GM12878 (cell line): ENCODE measurements at regions of chr20 and their contacts with region 1.

Region 1: GRCh38 chr20:45373353-45374100 is 4.6 kb downstream of the TP53TG5 start:
- DNase-seq: no peak
- ATAC-seq: peak; percentile 98
- H3K4me3 ChIP-seq: peak overlapping the region; percentile 59; the same call in 1 of the 2 replicates
- H3K27ac ChIP-seq: no peak overlapping the region
- H3K4me1 ChIP-seq: peaks cover 15% of the 10 kb centered on the region
- H3K27me3 ChIP-seq: no peaks in the 10 kb centered on the region
- CTCF ChIP-seq: peak; percentile 82 to 90 (median 89)
- EP300 ChIP-seq: no peak
- POLR2A ChIP-seq: no peak
- RAD21 ChIP-seq: peak; percentile 88

Region 2: GRCh38 chr20:45387274-45387673 is 13.7 kb after region 1 on chr20:
- CTCF ChIA-PET with region 1: interaction called, 24 read pairs
- POLR2A ChIA-PET with region 1: interaction called, 3 read pairs
- RAD21 ChIA-PET with region 1: interaction called, 3 read pairs
- SMC1A ChIA-PET with region 1: interaction called, 4 read pairs
- in situ Hi-C with region 1: no loop called
- intact Hi-C with region 1: no loop called
- DNase-seq: no peak
- ATAC-seq: no peak
- H3K4me3 ChIP-seq: no peak overlapping the region
- H3K27ac ChIP-seq: no peak overlapping the region
- H3K4me1 ChIP-seq: no peaks in the 10 kb centered on the region
- H3K27me3 ChIP-seq: no peaks in the 10 kb centered on the region
- CTCF ChIP-seq: no peak
- EP300 ChIP-seq: no peak
- POLR2A ChIP-seq: no peak
- RAD21 ChIP-seq: no peak

Region 3: DNA sequence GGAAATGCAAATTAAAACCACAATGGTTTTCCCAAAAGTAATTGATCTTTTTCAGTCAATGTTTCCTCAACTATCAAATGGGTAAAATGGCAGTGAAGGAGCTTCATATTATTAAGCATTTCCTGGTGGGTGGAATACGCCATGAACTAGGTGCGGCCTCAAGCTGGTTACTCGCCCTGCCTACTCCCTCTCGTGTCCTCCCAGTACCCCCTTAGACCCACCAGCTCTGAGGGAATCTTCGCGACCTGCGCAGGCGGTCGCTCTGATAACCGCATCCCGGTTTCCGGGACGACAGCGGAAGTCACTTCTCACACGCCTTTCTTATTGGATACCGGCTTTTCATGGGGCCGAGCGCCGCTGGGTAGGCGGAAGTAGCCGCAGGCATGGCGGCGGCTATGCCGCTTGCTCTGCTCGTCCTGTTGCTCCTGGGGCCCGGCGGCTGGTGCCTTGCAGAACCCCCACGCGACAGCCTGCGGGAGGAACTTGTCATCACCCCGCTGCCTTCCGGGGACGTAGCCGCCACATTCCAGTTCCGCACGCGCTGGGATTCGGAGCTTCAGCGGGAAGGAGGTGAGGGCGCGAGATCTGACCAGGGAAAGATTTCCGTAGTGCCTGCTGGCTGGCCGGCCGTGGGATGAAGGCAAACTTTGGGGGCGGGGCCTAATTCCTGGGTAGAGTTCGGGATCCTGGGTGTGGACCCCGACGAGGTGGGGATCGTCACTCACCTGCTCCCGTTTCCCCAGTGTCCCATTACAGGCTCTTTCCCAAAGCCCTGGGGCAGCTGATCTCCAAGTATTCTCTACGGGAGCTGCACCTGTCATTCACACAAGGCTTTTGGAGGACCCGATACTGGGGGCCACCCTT is 42.5 kb after region 1 on chr20 and contains the start of gene PIGT:
- CTCF ChIA-PET with region 1: interaction called, 86 read pairs
- POLR2A ChIA-PET with region 1: interaction called, 9 read pairs
- RAD21 ChIA-PET with region 1: interaction called, 24 read pairs
- SMC1A ChIA-PET with region 1: interaction called, 21 read pairs
- in situ Hi-C with region 1: loop called (anchors 5 kb)
- intact Hi-C with region 1: loop called (anchors 2 kb)
- DNase-seq: peak; percentile 51
- ATAC-seq: peak; percentile 83
- H3K4me3 ChIP-seq: peak within 1 kb of the TSS; percentile 97
- H3K27ac ChIP-seq: peak within 1 kb of the TSS; percentile 82
- H3K4me1 ChIP-seq: peaks cover 20% of the 10 kb centered on the region
- H3K27me3 ChIP-seq: no peaks in the 10 kb centered on the region
- CTCF ChIP-seq: no peak
- EP300 ChIP-seq: no peak
- POLR2A ChIP-seq: peak; percentile 99
- RAD21 ChIP-seq: no peak
- polyA plus RNA-seq, gene PIGT: 19.1 to 27.5 TPM

Region 4: DNA sequence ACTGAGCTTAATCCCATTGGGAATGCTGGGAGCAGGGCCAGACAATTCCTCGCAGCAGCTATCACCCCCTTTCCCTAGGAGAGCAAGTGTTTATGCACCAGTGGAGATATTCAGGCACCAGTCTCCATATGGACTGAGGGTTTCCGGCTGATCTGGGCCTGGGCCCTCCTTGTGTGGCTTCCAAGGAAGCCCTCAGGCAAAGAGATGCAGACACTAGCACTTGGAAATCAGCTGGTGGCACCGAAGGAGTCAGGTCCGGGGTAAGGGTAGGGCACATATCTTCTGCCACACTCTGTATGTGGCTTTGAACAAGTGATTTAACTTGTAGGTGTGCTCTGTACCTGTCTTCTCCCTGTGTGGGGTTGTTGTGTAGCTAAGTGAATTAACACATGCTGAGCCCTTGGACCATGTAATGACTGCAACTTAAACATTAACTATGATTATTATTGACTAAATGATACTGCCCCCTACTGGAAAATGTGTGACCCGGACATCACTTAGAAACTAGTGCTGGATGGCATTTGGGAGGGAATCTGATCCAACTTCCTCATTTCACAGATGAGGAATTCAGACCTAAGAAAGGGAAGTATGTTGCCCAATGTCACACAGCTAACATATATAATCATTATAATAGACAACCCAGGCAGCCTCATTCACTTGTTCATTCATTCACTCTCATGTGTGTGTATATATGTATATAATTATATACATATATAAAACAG is 76.7 kb after region 1 on chr20:
- CTCF ChIA-PET with region 1: interaction called, 34 read pairs
- POLR2A ChIA-PET with region 1: no interaction called
- RAD21 ChIA-PET with region 1: interaction called, 11 read pairs
- SMC1A ChIA-PET with region 1: interaction called, 13 read pairs
- in situ Hi-C with region 1: no loop called
- intact Hi-C with region 1: no loop called
- DNase-seq: no peak
- ATAC-seq: peak; percentile 74
- H3K4me3 ChIP-seq: no peak overlapping the region
- H3K27ac ChIP-seq: no peak overlapping the region
- H3K4me1 ChIP-seq: no peaks in the 10 kb centered on the region
- H3K27me3 ChIP-seq: no peaks in the 10 kb centered on the region; a peak in 3 of 4 replicates
- CTCF ChIP-seq: peak; percentile 46 to 61 (median 60)
- EP300 ChIP-seq: no peak
- POLR2A ChIP-seq: no peak
- RAD21 ChIP-seq: peak; percentile 58